Activated CD8-positive, alpha-beta memory T cell treated with anti-CD3 and anti-CD28 coated beads, Interleukin-2, amount 10 ng/mL, durations not matched to agents 7 days and 5 days (primary cell): ENCODE measurements at regions of chr1 and their contacts with region 1.

Region 1: GRCh38 chr1:205061665-205062069 is 18.7 kb downstream of the CNTN2 start:
- DNase-seq: peak; percentile 81
- ATAC-seq: peak; percentile 61
- H3K4me3 Mint-ChIP-seq: no peak overlapping the region
- H3K27ac Mint-ChIP-seq: no peak overlapping the region
- H3K4me1 Mint-ChIP-seq: no peaks in the 10 kb centered on the region
- H3K27me3 Mint-ChIP-seq: no peaks in the 10 kb centered on the region

Region 2: GRCh38 chr1:204819495-204819894 is 242.2 kb before region 1 on chr1:
- CTCF ChIA-PET with region 1: no interaction called
- DNase-seq: no peak
- ATAC-seq: no peak
- H3K4me3 Mint-ChIP-seq: no peak overlapping the region
- H3K27ac Mint-ChIP-seq: no peak overlapping the region
- H3K4me1 Mint-ChIP-seq: no peaks in the 10 kb centered on the region
- H3K27me3 Mint-ChIP-seq: peaks cover 38% of the 10 kb centered on the region

Region 3: GRCh38 chr1:204830747-204831146 is 230.9 kb before region 1 on chr1:
- CTCF ChIA-PET with region 1: no interaction called
- DNase-seq: no peak
- ATAC-seq: no peak
- H3K4me3 Mint-ChIP-seq: no peak overlapping the region
- H3K27ac Mint-ChIP-seq: no peak overlapping the region
- H3K4me1 Mint-ChIP-seq: peaks cover 3% of the 10 kb centered on the region
- H3K27me3 Mint-ChIP-seq: peaks cover 64% of the 10 kb centered on the region

Region 4: DNA sequence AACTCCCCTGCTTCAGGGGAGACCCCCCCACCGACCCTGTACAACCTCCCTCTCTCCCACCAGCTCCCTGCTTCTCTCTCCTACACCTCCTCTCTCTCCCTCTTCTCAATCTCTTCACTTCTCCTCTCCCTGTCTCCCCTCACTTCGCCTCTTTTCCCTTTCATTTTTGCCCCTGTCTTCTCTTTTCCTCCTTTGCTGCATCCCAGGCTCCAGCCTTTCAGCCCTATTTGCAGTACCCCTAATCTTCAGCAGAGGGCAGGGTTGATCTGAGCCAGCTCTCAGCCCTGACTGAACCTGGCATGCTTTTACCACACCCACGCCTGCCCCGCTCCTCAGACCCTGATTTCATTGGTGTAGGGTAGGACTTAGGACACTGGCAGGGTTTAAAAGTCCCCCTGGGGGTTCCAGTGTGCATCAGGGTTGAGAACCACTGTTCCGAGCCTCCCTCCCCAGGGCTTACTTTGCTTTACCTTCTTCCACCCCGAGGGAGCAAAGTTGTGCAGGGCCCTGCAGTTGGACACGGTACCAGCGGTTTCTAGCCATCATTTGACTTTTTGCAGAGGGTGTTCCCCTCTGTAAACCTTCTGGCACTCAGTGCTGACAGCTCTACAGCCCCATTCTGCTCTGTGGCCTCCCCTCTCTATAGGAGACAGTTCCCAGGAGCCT is 86.0 kb before region 1 on chr1:
- CTCF ChIA-PET with region 1: interaction called, 39 read pairs
- DNase-seq: peak; percentile 60
- ATAC-seq: peak; percentile 70
- H3K4me3 Mint-ChIP-seq: no peak overlapping the region
- H3K27ac Mint-ChIP-seq: no peak overlapping the region
- H3K4me1 Mint-ChIP-seq: peaks cover 20% of the 10 kb centered on the region
- H3K27me3 Mint-ChIP-seq: peaks cover 38% of the 10 kb centered on the region

Region 5: DNA sequence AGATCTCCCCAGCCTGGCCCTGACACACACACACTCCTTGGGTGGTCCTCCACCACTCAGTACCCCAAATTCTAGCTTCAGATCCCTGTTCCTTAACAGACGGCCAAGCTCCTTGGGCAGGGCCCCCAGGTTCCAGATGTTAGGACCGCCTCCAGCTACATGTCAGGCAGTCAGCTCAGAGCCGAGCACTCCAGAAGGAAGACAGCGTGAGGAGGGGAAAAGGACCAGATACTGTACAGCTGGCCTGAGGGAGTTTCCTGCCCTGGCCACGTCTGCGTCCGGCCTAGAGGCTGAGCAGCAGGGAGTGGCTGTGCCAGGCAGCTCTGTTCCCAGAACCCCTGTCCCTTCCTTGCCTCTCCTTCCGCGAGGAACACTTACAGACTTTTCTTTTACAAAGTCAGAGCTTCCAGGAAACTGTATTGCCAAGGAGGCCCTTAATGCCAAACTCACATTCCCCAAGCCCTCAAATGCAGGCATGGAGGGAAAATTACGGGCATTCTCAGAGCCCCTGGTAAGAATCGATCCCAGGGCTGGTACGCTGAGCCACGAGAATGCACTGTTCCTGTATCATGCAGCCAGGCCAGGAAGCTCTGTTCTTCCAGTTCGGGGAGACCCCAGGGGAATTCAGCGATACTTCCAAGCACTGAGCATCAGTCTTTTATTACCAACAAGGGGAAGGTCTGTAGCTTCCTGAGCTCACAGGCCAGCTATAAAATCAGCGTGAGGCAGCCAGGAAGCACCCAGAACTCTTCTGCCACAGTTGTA is 63.9 kb before region 1 on chr1:
- CTCF ChIA-PET with region 1: interaction called, 103 read pairs
- DNase-seq: no peak
- ATAC-seq: no peak
- H3K4me3 Mint-ChIP-seq: no peak overlapping the region
- H3K27ac Mint-ChIP-seq: no peak overlapping the region
- H3K4me1 Mint-ChIP-seq: peaks cover 3% of the 10 kb centered on the region
- H3K27me3 Mint-ChIP-seq: peaks cover 13% of the 10 kb centered on the region

Region 6: DNA sequence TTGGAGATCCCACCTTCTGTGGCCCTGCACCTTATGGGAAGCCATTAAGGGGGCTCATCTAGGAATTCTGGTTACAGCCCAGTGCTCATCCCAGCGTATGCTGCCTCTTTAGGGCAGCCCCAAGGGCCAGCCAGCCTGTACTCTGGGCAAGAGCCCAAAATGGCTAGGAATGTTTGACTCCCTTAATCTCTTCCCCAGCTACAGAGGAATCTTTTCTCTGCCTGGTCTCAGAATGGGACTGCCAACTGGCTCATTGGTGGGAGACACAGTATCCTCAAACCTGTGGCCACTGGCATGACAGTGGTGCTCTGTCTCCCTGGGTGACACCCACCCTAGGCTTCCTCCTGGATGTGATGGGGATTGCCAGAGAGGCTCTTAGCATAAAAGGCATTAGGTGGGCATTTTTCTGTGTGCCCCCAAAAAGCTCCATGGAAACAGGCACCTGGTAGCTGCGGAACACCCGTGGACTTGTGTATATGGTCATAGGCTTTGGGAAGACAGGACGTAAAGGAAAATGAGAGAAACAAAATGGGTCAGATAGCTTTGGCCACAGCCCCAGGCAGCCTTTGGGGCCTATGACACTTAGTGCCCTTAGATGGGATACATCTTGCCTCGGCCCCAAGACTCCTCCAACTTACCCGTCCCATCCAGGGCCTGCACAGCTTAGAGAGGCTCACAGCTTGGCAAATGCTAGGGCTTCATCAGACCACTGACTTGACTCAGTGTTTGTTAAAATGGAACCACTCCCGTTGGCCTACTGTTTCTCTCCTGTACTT is 15.7 kb after region 1 on chr1:
- CTCF ChIA-PET with region 1: interaction called, 28 read pairs
- DNase-seq: no peak
- ATAC-seq: no peak
- H3K4me3 Mint-ChIP-seq: no peak overlapping the region
- H3K27ac Mint-ChIP-seq: no peak overlapping the region
- H3K4me1 Mint-ChIP-seq: no peaks in the 10 kb centered on the region
- H3K27me3 Mint-ChIP-seq: no peaks in the 10 kb centered on the region

Region 7: GRCh38 chr1:205141236-205142101 is 79.8 kb after region 1 on chr1:
- CTCF ChIA-PET with region 1: interaction called, 11 read pairs
- DNase-seq: peak; percentile 88
- ATAC-seq: peak; percentile 92
- H3K4me3 Mint-ChIP-seq: no peak overlapping the region
- H3K27ac Mint-ChIP-seq: no peak overlapping the region
- H3K4me1 Mint-ChIP-seq: peaks cover 6% of the 10 kb centered on the region
- H3K27me3 Mint-ChIP-seq: no peaks in the 10 kb centered on the region